Activated CD4-positive, alpha-beta T cell treated with anti-CD3 and anti-CD28 coated beads for 36 hours (primary cell): ENCODE measurements at regions of chr1 and their contacts with region 1.

Region 1: GRCh38 chr1:29181413-29182225 is at the start of gene SRSF4:
- DNase-seq: peak; percentile 100
- ATAC-seq: peak; percentile 91
- H3K4me3 Mint-ChIP-seq: peak within 1 kb of the TSS; percentile 87
- H3K27ac Mint-ChIP-seq: peak within 1 kb of the TSS; percentile 99
- H3K4me1 Mint-ChIP-seq: peaks cover 39% of the 10 kb centered on the region
- H3K27me3 Mint-ChIP-seq: no peaks in the 10 kb centered on the region
- total RNA-seq, gene SRSF4: 129 to 147 TPM

Region 2: DNA sequence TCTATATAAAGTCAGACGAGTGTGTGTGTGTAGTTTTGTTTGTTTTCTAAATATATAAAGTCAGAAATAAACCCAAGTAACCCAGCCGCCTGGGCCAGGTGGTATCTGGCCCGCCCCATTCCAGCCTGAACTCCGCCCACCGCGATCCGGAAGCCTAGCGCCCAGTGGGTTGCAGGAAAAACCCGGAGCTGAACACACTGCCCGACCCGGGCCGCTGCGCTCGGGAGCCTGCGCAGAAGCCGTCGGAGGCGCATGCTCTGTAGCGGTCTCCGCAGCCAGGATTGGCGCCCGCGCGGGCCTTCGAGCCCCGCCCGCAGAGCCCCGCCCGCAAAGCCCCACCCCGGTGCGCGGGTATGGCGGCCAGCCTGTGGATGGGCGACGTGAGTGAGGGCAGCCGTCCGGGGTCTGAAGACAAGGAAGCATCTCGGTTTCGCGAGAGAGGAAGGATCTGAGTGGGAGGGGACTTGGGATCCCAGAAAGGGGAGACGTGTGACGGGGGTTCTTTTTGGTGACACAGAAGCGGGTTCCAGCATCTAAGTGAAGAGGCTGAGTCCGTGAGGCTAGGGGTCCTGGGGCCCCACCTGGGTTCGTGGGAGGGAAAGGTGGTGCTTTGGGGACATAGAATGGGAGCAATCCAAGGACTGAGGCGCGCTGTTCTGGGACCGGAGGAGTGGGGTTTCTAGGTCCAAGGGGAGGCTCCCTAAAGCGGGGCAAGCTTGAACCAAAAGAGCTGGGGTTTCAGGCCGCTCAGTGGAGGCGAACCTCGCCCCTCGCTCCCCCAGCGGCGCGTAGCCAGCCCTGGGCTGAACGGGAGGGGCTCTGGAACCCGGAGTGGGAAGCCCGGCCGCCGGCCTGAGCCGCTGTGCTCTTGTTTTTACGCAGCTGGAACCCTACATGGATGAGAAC is 628.6 kb before region 1 on chr1 and contains the start of gene TRNAU1AP:
- CTCF ChIA-PET with region 1: no interaction called
- POLR2A ChIA-PET with region 1: no interaction called
- intact Hi-C with region 1: loop called in 1 of 2 experiments (anchors 2 kb)
- DNase-seq: peak; percentile 99
- ATAC-seq: peak; percentile 94
- H3K4me3 Mint-ChIP-seq: peak within 1 kb of the TSS; percentile 92
- H3K27ac Mint-ChIP-seq: peak within 1 kb of the TSS; percentile 95
- H3K4me1 Mint-ChIP-seq: peaks cover 24% of the 10 kb centered on the region
- H3K27me3 Mint-ChIP-seq: no peaks in the 10 kb centered on the region
- total RNA-seq, gene TRNAU1AP: 50.7 to 60.2 TPM

Region 3: DNA sequence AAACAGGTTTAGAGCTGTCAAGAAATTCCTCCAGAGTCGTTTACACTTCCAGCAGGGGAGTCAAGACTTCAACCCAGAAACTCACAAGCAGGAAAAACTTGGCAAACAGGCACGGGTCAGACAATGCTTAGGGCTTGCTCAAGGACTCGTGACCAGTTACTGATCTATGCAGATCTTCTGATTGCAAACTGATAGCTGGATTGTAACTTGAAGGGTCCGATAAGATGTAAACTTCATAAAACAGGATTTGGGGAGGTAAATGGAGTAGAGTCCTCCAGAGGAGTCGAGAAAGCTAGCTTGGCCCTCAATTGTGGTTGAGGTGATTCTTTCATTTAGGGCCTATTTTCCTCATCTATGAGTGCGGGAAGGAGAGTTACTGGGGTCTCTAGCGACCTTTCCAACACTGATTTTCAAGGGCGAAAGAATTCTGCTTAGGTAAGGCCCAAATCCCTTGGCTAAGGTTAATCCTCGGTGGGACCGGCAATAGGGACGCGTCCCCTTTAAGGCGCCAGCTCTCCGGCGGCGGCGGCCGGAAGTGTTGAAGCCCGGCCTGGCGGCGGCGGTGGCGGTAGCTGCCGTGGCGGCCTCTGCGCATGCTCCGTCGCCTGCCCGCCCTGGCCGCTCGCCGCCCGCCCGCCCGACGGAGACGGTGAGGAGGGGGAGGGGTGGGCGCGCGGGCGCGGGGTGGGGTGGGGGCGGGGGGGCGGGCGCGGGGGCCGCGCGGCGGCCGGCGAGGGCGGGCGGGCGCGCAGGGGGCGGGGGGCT is 513.2 kb before region 1 on chr1 and contains the start of gene GMEB1:
- CTCF ChIA-PET with region 1: interaction called, 3 read pairs
- POLR2A ChIA-PET with region 1: no interaction called
- intact Hi-C with region 1: loop called in 1 of 2 experiments (anchors 1 kb)
- DNase-seq: peak; percentile 93
- ATAC-seq: peak; percentile 72
- H3K4me3 Mint-ChIP-seq: peak within 1 kb of the TSS; percentile 84
- H3K27ac Mint-ChIP-seq: peak within 1 kb of the TSS; percentile 99
- H3K4me1 Mint-ChIP-seq: peaks cover 11% of the 10 kb centered on the region
- H3K27me3 Mint-ChIP-seq: no peaks in the 10 kb centered on the region
- total RNA-seq, gene GMEB1: 20.3 to 25.4 TPM

Region 4: GRCh38 chr1:28926629-28927265 is 254.9 kb before region 1 on chr1:
- CTCF ChIA-PET with region 1: no interaction called
- POLR2A ChIA-PET with region 1: no interaction called
- intact Hi-C with region 1: loop called in 1 of 2 experiments (anchors 5 kb)
- DNase-seq: peak; percentile 24
- ATAC-seq: peak; percentile 89
- H3K4me3 Mint-ChIP-seq: peak overlapping the region; percentile 53
- H3K27ac Mint-ChIP-seq: peak overlapping the region; percentile 94
- H3K4me1 Mint-ChIP-seq: peaks cover 56% of the 10 kb centered on the region
- H3K27me3 Mint-ChIP-seq: no peaks in the 10 kb centered on the region

Region 5: GRCh38 chr1:29124366-29125236 is 57.0 kb before region 1 on chr1:
- CTCF ChIA-PET with region 1: interaction called, 3 read pairs
- POLR2A ChIA-PET with region 1: interaction called, 4 read pairs
- intact Hi-C with region 1: loop called (anchors 1 to 5 kb)
- DNase-seq: peak; percentile 79
- ATAC-seq: peak; percentile 62
- H3K4me3 Mint-ChIP-seq: peak overlapping the region; percentile 65
- H3K27ac Mint-ChIP-seq: no peak overlapping the region
- H3K4me1 Mint-ChIP-seq: peaks cover 2% of the 10 kb centered on the region
- H3K27me3 Mint-ChIP-seq: peaks cover 12% of the 10 kb centered on the region

Region 6: GRCh38 chr1:29356663-29357062 is 175.0 kb after region 1 on chr1:
- CTCF ChIA-PET with region 1: no interaction called
- POLR2A ChIA-PET with region 1: no interaction called
- intact Hi-C with region 1: no loop called
- DNase-seq: peak; percentile 30
- ATAC-seq: peak; percentile 58
- H3K4me3 Mint-ChIP-seq: no peak overlapping the region
- H3K27ac Mint-ChIP-seq: no peak overlapping the region
- H3K4me1 Mint-ChIP-seq: peaks cover 5% of the 10 kb centered on the region
- H3K27me3 Mint-ChIP-seq: peaks cover 22% of the 10 kb centered on the region

Region 7: DNA sequence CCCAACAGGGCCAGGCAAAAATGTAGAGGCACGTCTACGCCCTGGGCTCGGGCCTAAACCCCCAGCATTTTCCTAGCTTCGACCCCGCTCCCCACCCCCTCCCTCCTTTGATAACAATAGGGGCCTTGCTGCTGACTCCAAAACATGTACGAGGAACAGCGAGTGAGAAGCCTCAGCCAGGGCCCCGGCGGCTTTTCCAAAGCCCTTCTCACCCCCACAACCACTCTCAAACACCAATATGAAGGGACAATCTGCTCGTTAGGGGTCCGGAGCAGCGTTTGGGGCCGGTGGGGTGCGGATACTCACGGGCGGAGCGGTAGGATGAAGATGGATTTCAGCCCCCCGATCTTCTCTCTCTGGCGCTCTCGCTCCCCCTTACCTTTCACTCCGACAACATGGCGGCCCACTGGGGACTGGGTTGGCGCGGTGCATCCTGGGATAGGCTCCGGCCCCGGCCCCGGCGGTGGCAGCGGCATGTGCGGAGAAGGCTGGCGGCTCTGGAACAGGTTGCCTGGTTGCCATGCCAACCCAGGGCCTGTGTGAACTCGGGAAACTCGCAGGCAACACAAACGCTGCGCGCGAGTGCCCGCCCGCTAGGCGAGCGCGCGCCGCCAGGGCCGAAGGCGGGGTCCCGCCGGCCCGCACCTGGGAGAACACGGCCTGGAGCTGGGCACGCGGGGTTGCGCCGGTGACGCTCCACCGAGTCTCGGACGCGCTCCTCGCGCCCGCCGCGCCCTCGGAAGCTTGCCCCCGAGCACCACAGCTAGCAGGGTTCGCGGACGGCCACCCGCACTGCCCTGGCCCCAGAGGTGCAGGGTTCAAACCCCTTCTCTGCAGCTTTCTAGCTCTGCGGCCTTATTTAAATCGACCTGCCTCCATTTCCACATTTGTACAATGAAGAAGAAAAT is 1883.9 kb after region 1 on chr1 and contains the start of gene PUM1:
- CTCF ChIA-PET with region 1: no interaction called
- POLR2A ChIA-PET with region 1: no interaction called
- intact Hi-C with region 1: loop called in 1 of 2 experiments (anchors 2 kb)
- DNase-seq: peak; percentile 99
- ATAC-seq: peak; percentile 97
- H3K4me3 Mint-ChIP-seq: peak within 1 kb of the TSS; percentile 92
- H3K27ac Mint-ChIP-seq: peak within 1 kb of the TSS; percentile 99
- H3K4me1 Mint-ChIP-seq: peaks cover 22% of the 10 kb centered on the region
- H3K27me3 Mint-ChIP-seq: no peaks in the 10 kb centered on the region
- total RNA-seq, gene PUM1: 87.1 to 91.4 TPM